PC-3 (cell line): ENCODE measurements at regions of chr17 and their contacts with region 1.

Region 1: DNA sequence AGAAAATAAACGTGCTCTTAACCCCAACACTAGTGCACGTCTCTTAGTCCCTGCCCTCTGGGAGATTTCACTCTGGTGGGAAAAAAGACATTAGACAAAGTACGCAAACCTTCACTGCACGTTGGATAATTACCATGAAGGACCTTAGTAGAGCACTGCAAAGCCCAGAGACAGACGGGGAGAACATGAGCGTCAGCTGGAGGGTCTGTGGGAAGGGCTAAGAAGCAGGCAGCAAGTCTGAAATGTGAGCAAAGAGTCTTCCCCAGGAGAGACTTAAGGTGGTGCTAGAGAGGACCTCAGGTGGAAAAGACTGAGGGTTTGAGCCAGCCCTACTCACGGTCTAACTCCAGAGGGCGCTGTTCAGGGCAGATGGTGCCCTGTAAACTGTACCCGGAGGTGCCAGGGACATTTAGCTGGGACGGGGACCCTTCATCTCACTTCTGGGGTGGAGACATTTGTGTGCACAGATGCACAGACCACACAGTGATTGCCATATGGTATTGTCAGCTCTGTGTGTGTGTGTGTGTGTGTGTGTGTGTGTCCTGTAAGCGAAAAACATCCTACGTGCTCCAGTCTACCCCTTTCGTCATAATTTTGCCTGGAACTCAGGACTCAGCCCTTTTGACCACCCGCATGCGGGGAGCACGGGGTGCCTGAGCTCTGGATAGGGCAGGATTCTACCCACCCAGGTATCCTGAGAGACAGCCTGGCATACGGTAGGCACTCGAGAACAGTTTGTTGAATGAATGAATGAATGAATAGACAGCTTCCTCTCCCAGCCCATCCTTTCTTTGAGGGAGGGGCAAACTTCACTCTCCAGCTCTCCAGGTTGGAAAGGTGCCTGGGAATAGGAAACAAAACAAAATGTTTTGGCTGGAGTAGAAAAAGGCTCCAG is 10.1 kb upstream of the STAC2 start:
- DNase-seq: peak; percentile 51
- ATAC-seq: peak; percentile 42
- H3K4me3 ChIP-seq: no peak overlapping the region
- H3K27ac ChIP-seq: no peak overlapping the region
- H3K4me1 ChIP-seq: peaks cover 11% of the 10 kb centered on the region
- H3K27me3 ChIP-seq: no peaks in the 10 kb centered on the region
- CTCF ChIP-seq: peak; percentile 87

Region 2: DNA sequence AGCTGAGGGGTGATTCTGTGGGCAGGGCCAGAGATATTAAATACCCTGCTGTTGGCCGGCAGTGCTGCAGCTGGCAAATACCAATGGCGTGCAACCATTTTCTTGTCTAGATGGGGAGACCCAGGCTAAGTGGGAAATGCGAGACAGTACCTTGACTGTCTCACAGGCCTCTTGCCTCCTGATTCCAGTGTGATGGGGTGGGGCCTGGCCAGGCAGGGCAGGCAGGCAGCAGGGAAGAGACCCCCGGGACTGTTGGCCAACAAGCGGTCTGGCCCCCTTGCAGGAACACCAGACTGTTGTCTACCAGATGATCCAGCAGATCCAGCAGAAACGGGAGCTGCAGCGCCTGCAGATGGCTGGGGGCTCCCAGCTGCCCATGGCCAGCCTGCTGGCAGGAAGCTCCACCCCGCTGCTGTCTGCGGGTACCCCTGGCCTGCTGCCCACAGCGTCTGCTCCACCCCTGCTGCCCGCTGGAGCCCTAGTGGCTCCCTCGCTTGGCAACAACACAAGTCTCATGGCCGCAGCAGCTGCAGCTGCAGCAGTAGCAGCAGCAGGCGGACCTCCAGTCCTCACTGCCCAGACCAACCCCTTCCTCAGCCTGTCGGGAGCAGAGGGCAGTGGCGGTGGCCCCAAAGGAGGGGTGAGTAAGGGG is 511.3 kb before region 1 on chr17:
- CTCF ChIA-PET with region 1: interaction called, 11 read pairs
- POLR2A ChIA-PET with region 1: no interaction called
- intact Hi-C with region 1: no loop called
- DNase-seq: no peak
- ATAC-seq: no peak
- H3K4me3 ChIP-seq: no peak overlapping the region
- H3K27ac ChIP-seq: no peak overlapping the region
- H3K4me1 ChIP-seq: peaks cover 4% of the 10 kb centered on the region
- H3K27me3 ChIP-seq: no peaks in the 10 kb centered on the region
- CTCF ChIP-seq: no peak

Region 3: GRCh38 chr17:39069114-39069756 is 166.6 kb before region 1 on chr17:
- CTCF ChIA-PET with region 1: no interaction called
- POLR2A ChIA-PET with region 1: no interaction called
- intact Hi-C with region 1: loop called (anchors 10 kb)
- DNase-seq: peak; percentile 40
- ATAC-seq: peak; percentile 54; the same call in 1 of the 2 replicates
- H3K4me3 ChIP-seq: no peak overlapping the region
- H3K27ac ChIP-seq: no peak overlapping the region
- H3K4me1 ChIP-seq: no peaks in the 10 kb centered on the region
- H3K27me3 ChIP-seq: no peaks in the 10 kb centered on the region
- CTCF ChIP-seq: peak; percentile 64

Region 4: DNA sequence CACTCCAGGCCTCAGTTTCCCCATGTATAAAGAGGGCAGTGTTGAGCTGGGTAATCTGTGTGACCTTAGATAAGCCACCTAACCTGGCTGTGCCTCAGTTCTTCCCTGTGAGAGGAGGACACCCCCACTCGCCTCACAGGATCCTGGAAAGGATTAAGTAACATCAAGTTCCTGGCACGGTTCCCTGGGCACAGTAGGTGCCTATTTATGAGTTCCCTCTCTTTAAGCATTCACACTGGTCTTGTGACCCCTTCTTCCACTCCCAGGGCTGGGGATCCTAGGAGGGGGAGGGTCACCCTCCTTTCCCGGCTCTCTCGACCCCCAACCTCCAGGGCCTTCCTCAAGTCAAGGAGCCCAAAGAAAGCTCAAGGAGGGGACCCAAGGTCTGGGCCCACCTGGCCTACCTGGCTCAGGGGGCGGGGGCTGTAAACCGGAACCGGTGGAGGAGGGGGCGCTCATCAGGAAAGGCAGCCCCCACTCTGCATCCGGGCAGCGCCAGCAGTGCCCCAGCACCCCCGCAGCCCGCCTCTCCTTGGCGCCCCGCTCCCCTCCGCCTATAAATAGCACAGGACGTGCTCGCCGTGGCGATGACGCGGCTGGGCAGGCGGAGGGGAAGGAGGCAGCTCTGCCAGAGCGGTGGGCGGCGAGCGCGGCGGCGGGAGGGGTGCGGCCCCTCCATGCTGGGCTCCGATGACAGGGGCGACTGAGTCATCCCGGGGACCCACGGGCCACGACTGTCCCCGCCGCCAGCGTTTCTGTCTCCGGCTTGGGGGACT is 26.3 kb before region 1 on chr17:
- CTCF ChIA-PET with region 1: interaction called, 15 read pairs
- POLR2A ChIA-PET with region 1: interaction called, 4 read pairs
- intact Hi-C with region 1: no loop called
- DNase-seq: no peak
- ATAC-seq: no peak
- H3K4me3 ChIP-seq: no peak overlapping the region
- H3K27ac ChIP-seq: no peak overlapping the region
- H3K4me1 ChIP-seq: no peaks in the 10 kb centered on the region
- H3K27me3 ChIP-seq: no peaks in the 10 kb centered on the region
- CTCF ChIP-seq: no peak